Left colon (tissue), 2 donors: ENCODE measurements at regions of chr7 and their contacts with region 1.

Region 1: DNA sequence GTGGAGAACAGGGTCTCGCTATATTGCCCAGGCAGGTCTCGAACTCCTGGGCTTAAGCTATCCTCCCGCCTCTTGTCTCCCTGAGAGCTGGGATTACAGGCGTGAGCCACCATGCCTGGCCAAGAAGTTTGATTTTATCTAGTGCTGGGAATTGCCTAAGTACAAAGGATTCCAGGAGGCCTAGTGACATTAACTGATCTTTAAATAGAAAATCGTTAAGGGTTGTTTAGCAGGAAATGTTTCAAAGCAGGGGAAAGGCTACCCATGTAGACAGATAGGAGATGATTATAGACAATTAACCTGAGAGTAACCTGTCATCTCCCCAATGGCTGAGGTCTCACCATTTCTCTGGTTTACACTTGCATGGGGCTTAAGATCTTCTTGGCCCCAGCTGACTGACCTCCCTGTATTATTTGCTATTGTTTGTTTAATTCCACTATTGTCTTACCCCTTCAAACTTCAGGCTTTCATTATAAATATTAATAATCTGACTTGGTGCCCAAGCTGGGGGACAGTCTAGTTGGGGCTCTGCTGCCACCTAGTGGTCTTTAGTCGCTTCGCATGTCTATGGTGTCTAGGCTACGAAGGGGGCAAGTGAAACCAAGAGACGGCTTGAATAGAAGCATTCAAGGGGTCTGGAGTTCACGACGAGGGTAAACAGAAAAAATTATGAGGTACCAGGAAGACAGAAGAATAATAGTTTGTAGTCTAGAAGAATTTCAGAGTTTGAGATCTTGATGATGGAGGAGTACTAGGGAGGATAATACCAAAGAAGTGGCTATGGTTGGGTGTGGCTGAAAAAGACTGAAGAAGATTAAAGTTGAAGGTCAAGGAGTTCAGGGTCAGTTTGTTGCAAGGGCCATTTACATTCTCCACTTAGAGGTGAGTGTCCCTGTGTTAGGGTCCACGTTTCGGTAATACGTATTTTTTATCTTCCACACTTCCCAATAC is 40.4 kb upstream of the BPGM start:
- DNase-seq: peak; percentile 44 to 70
- ATAC-seq: peak; percentile 79

Region 2: GRCh38 chr7:134432296-134433152 is 173.7 kb before region 1 on chr7:
- intact Hi-C with region 1: loop called in 1 of 2 experiments (anchors 5 kb)
- DNase-seq: peak; percentile 88 to 92
- ATAC-seq: peak; percentile 82

Region 3: DNA sequence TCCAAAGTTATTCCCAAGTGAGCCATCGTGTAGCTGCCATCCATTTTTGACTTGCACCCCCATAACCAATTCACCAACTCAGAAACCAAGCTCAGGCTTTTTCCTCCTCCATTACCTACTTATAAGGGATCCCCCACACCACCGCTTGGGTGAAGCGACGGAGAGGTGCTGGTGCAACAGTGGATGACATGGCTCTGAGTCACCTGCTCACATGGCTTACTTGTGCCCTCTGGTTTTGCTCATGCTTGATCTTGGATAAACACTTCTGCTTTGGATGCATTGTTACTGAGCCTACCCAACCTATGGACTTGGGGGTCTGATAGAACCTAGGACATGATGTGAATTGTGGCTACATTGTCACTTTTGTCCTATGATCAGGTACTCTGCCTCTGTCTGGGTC is 135.4 kb before region 1 on chr7:
- intact Hi-C with region 1: no loop called
- DNase-seq: no peak
- ATAC-seq: no peak